SK-N-SH (cell line): ENCODE measurements at regions of chr2 and their contacts with region 1.

Region 1: GRCh38 chr2:37664231-37664643 is 7.2 kb downstream of the CDC42EP3 start:
- DNase-seq: no peak
- H3K4me3 ChIP-seq: no peak overlapping the region
- H3K27ac ChIP-seq: peak overlapping the region; percentile 30 to 34; a peak in 2 of 4 replicates
- H3K4me1 ChIP-seq: peaks cover 60 to 67% of the 10 kb centered on the region in 2 experiments
- H3K27me3 ChIP-seq: no peaks in the 10 kb centered on the region
- CTCF ChIP-seq: no peak
- EP300 ChIP-seq: no peak
- RAD21 ChIP-seq: no peak

Region 2: GRCh38 chr2:37653805-37654378 is 10.3 kb before region 1 on chr2:
- CTCF ChIA-PET with region 1: interaction called, 7 read pairs
- POLR2A ChIA-PET with region 1: interaction called, 14 read pairs
- DNase-seq: no peak
- H3K4me3 ChIP-seq: no peak overlapping the region
- H3K27ac ChIP-seq: peak overlapping the region; percentile 77 to 87
- H3K4me1 ChIP-seq: peaks cover 62 to 65% of the 10 kb centered on the region in 2 experiments
- H3K27me3 ChIP-seq: no peaks in the 10 kb centered on the region
- CTCF ChIP-seq: no peak
- EP300 ChIP-seq: no peak; a peak in 1 of 4 replicates
- RAD21 ChIP-seq: no peak